Right ventricle myocardium inferior (tissue), 1 donor: ENCODE measurements at regions of chr4 and their contacts with region 1.

Region 1: DNA sequence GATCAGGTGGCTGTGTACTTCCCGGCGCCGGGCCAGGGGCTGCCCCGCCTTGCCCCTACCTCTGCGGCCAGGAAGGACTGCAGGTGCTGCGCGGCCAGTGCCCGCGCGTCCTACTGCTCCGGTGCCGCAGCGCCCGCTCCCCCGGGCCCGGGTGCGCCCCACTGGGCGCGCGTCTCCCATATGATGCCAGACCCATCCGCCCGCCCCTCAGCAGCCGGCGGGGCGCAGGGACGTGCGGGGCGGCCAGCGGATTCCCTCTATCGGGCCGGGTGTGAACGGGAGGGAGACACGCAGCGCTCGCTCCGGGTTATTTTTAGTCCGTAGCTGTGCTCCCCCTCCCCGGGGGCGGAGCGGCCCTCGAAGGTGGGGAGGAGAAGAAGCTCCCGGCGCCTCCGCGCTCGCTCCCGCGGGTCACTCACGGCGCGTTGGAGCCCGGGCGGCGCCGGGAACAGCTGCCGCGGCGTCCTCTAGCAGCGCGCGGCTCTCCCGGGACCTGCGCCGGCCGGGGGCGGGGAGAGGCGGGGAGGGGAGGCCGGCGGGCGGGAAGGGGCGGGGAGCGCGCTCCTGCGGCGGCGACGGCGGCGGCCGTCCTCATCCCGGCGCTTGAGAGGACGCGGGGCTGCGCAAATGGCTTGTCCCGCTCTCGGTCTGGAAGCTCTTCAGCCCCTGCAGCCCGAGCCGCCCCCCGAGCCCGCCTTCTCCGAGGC is 103.6 kb downstream of the UCHL1 start:
- DNase-seq: peak; percentile 87
- ATAC-seq: peak; percentile 88

Region 2: DNA sequence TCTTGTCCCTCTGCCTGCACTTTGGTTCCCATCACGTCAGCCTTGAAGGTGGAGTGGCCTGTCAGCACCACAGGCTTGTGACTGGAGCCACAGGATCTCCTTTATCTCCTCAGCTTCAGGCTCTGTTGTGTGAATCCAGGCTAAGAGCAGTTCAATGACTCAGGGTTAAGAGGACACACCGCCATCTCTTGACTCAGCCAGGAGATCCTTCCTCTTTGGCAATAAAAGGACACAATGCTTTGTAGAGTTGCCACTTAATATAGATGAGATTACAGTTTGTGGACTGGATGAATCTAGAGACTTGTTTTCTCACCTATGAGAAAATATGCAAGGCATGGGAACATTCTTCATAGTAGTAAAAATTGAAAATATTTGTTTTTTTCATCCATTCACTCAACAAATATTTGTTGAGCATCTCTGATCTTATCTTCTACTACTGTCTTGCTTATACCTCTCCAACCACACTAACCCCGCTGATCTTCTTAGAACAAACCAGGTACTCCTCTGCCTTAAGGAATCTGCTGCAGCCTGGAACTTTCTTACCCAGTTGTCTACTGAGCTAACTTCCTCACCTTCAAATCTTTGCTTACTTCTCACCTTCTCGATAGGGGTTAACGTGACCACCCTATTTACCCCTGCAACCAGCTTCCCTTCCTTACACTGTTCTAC is 41.4 kb before region 1 on chr4:
- intact Hi-C with region 1: loop called (anchors 5 kb)
- DNase-seq: no peak
- ATAC-seq: peak; percentile 91

Region 3: DNA sequence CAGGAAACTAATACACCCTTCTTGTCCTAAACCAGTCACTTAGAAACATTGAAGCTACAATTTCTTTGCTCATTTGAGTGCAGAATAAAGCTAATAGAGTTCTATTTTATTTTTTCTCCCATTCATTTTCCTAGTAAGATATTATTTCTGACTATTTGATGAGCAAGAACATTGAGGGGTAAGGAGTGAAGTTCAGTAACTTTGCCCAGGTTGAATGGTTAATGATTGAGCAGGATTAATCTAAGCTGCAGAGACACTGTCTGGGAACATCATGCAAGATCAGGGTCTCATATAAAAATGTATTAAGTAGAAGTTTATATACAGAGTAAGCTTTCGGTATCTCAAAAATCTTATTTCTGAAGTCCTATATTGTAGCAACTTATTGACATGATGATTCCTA is 75.1 kb after region 1 on chr4:
- intact Hi-C with region 1: no loop called
- DNase-seq: no peak
- ATAC-seq: no peak

Region 4: GRCh38 chr4:41538017-41538733 is 177.8 kb after region 1 on chr4 and contains the start of gene LIMCH1:
- intact Hi-C with region 1: loop called (anchors 5 kb)
- DNase-seq: peak; percentile 84
- ATAC-seq: peak; percentile 89
- total RNA-seq, gene LIMCH1: 294 TPM

Region 5: DNA sequence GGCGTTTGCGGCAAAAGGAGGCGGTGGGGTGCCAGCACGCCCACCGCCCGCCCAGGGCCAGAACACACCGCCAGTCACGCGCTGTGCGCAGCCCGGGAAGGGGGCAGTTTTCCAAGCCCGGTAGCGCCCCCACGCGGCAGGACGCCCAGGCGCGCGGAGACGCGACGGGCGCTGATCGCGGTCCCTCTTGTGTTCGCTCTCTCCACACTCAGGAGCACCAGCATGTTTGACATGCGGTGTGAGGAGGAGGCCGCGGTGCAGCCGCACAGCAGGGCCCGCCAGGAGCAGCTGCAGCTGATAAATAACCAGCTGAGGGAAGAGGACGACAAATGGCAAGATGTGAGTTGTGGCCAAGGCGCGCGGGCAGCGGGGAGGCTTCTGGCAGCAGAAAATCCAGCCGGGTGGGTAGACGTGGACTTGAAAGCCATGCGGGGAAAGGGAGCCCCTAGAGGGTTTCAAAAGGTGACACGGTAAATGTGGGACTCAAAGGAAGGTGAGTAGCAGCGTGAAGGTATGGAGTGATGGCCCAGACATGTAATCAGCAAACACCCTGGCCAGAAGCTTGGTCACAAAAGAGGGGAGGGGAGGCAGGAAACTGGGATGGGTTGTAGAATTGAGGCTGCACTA is 284.0 kb after region 1 on chr4:
- intact Hi-C with region 1: loop called (anchors 5 kb)
- DNase-seq: peak; percentile 83
- ATAC-seq: peak; percentile 88